H1 (cell line): ENCODE measurements at regions of chr3 and their contacts with region 1.

Region 1: DNA sequence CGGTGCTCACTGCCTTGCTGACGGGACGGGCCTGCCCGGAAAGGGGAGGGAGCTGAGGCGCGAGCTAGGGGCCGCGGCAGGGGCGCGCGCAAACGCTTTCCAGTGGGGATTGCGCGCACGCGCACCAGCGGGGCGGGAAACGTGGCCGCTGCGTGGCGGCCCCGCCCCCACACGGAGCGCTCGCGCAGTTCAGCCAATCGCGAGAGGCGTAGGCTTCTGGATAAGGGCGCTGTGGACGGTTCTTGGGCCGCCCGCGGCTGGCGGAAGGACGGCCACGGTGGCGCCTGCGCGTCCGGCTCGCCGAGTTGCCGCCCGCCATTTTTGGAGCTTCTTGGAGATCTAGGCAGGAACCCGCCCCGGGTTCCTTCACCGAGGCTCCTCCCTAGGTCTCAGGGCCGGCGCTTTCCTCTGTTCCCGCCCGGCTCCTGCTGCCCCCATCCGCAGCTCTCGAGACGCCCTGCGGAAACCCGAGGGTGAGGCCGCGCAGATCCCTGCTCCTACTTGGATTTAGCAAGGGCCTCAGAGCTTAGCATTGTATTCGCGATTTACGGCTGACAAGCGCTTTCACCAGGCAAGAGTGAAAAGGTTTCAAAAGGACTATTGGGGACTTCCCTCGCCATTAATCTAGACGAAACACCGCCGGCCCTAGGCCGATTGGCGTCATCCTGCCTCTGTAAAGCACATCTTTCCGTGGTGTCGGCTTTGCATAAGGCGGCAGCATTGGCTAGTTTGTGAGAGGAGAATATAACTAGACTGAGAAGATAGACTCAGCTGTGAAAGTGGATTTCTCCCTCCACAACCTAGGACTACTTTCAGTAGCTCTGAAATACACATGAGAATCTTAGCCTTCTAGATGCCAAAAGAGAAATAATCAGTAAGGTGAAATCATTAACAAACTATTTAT is 496 bp upstream of the STAG1 start:
- DNase-seq: peak; percentile 95 to 99
- H3K4me3 ChIP-seq: peak overlapping the region; percentile 78 to 90 (median 82)
- H3K27ac ChIP-seq: peak overlapping the region; percentile 96
- H3K4me1 ChIP-seq: peaks cover 3 to 16% (median 7%) of the 10 kb centered on the region in 4 experiments; a peak in 5 of 7 replicates
- H3K27me3 ChIP-seq: no peaks in the 10 kb centered on the region
- CTCF ChIP-seq: no peak
- EP300 ChIP-seq: peak in 1 of 2 experiments; percentile 93; a peak in 1 of 3 replicates
- POLR2A ChIP-seq: peak; percentile 68 to 83
- RAD21 ChIP-seq: 0 out of 4 replicates have a peak, but pooled peaks of 1 of the 2 experiments have one; percentile 0

Region 2: DNA sequence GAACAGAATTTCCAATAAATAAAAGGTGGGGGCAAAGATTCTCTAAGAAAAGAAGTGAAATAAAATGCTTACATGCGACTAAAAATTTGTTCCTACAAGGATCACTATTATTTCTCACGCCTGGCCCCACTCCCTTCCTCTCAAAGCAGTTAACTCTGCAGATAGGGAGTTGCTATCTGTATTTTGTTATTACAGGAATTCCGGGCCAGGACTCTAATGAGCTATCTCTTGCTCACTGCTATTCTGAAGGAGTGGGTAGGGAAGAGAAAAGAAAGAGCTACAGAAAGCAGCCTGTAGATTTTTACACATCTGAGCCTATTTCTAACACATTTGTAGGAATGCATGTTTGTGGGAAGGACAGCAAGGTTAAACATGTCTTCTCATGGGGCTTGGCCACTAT is 362.1 kb before region 1 on chr3:
- CTCF ChIA-PET with region 1: interaction called, 22 read pairs
- POLR2A ChIA-PET with region 1: interaction called, 13 read pairs
- DNase-seq: no peak
- H3K4me3 ChIP-seq: no peak overlapping the region
- H3K27ac ChIP-seq: no peak overlapping the region
- H3K4me1 ChIP-seq: no peaks in the 10 kb centered on the region
- H3K27me3 ChIP-seq: no peaks in the 10 kb centered on the region
- CTCF ChIP-seq: no peak
- EP300 ChIP-seq: no peak
- POLR2A ChIP-seq: no peak
- RAD21 ChIP-seq: no peak

Region 3: GRCh38 chr3:136545664-136546268 is 206.9 kb before region 1 on chr3:
- CTCF ChIA-PET with region 1: interaction called, 6 read pairs
- POLR2A ChIA-PET with region 1: interaction called, 24 read pairs
- DNase-seq: no peak
- H3K4me3 ChIP-seq: no peak overlapping the region
- H3K27ac ChIP-seq: no peak overlapping the region
- H3K4me1 ChIP-seq: no peaks in the 10 kb centered on the region
- H3K27me3 ChIP-seq: no peaks in the 10 kb centered on the region
- CTCF ChIP-seq: no peak
- EP300 ChIP-seq: no peak
- POLR2A ChIP-seq: no peak
- RAD21 ChIP-seq: peak; percentile 36 to 47

Region 4: GRCh38 chr3:136678981-136679380 is 73.7 kb before region 1 on chr3:
- CTCF ChIA-PET with region 1: no interaction called
- POLR2A ChIA-PET with region 1: no interaction called
- DNase-seq: no peak
- H3K4me3 ChIP-seq: no peak overlapping the region
- H3K27ac ChIP-seq: no peak overlapping the region
- H3K4me1 ChIP-seq: no peaks in the 10 kb centered on the region
- H3K27me3 ChIP-seq: no peaks in the 10 kb centered on the region
- CTCF ChIP-seq: no peak
- EP300 ChIP-seq: no peak
- POLR2A ChIP-seq: no peak
- RAD21 ChIP-seq: no peak

Region 5: DNA sequence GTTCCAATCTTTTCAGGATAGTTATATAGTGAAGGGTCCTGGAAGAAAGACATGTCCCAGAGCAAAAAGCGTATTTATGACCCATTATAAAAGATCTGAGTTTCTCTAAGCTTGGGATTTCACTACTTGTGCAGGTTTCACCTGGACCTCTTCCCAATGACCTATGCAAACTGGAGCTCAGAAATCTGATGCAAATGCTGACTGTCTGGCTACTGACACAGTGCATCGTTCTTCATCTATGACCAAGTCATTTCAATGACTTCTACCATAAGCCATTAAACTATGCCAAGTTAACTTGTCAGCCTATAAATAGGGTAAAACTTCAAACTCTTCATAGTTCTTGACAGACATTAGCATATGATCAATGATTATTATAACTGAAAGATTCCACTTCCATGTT is 11.6 kb before region 1 on chr3:
- CTCF ChIA-PET with region 1: interaction called, 6 read pairs
- POLR2A ChIA-PET with region 1: interaction called, 19 read pairs
- DNase-seq: no peak
- H3K4me3 ChIP-seq: no peak overlapping the region
- H3K27ac ChIP-seq: no peak overlapping the region
- H3K4me1 ChIP-seq: 0 out of 7 replicates have a peak, but pooled peaks cover 0 to 2% (median 0%) of the 10 kb centered on the region in 4 experiments
- H3K27me3 ChIP-seq: no peaks in the 10 kb centered on the region
- CTCF ChIP-seq: no peak
- EP300 ChIP-seq: no peak
- POLR2A ChIP-seq: no peak
- RAD21 ChIP-seq: no peak

Region 6: GRCh38 chr3:136861890-136862616 is 109.4 kb after region 1 on chr3 and contains the start of gene NCK1:
- CTCF ChIA-PET with region 1: interaction called, 11 read pairs
- POLR2A ChIA-PET with region 1: interaction called, 39 read pairs
- DNase-seq: peak; percentile 91 to 94
- H3K4me3 ChIP-seq: peak within 1 kb of the TSS; percentile 61 to 88 (median 84)
- H3K27ac ChIP-seq: peak within 1 kb of the TSS; percentile 70
- H3K4me1 ChIP-seq: peaks cover 0 to 9% (median 1%) of the 10 kb centered on the region in 4 experiments; a peak in 3 of 7 replicates
- H3K27me3 ChIP-seq: no peaks in the 10 kb centered on the region
- CTCF ChIP-seq: peak in 1 of 3 experiments; percentile 10; a peak in 1 of 4 replicates
- EP300 ChIP-seq: no peak; a peak in 1 of 3 replicates
- POLR2A ChIP-seq: peak; percentile 55 to 90
- RAD21 ChIP-seq: 0 out of 4 replicates have a peak, but pooled peaks of 1 of the 2 experiments have one; percentile 10
- total RNA-seq, gene NCK1: 28.5 and 28.7 TPM in 2 replicates

Region 7: DNA sequence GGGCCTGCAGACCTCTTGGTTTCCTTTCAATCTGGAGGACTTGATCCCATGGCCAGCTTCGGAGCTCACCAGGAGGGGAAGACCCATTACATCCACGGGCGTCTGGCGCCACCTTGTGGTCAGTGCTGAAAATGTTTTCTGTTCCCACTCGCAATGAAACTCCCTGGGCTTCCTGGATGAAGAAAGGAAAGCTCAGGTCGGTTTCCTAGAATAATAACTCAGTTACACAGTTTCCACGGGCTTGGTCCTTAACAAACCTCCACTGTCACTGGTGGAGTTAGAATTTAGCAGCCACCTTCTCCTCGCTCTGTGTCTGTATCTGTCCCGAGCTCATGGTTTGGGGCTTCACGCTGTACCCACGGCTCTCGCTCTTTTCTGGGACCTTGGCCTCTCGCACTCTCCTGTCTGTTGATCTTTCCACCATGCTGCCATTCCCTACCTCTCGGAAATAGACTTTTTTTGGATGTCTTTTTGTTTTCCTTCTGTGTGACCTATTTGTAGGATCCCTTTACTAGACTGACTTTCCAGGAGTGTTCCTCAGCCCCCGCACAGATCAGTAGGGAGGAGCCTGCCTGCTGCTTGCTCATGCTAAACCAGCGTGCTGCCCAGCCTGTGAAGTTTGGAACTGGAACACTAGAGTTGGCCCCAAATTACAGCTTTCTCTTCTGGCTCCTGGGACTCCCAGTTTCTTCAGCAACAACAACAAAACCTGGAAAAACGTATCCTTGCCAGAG is 261.4 kb after region 1 on chr3:
- CTCF ChIA-PET with region 1: interaction called, 65 read pairs
- POLR2A ChIA-PET with region 1: interaction called, 18 read pairs
- DNase-seq: peak; percentile 65 to 96
- H3K4me3 ChIP-seq: peak overlapping the region in 2 of 4 experiments; percentile 4 to 38; a peak in 3 of 8 replicates
- H3K27ac ChIP-seq: no peak overlapping the region
- H3K4me1 ChIP-seq: peaks cover 0 to 4% (median 0%) of the 10 kb centered on the region in 4 experiments; a peak in 1 of 7 replicates
- H3K27me3 ChIP-seq: no peaks in the 10 kb centered on the region
- CTCF ChIP-seq: peak; percentile 74 to 92 (median 81)
- EP300 ChIP-seq: no peak
- POLR2A ChIP-seq: no peak
- RAD21 ChIP-seq: peak; percentile 98 to 100